Heart right ventricle (tissue), 16 donors: ENCODE measurements at regions of chr20 and their contacts with region 1.

Region 1: DNA sequence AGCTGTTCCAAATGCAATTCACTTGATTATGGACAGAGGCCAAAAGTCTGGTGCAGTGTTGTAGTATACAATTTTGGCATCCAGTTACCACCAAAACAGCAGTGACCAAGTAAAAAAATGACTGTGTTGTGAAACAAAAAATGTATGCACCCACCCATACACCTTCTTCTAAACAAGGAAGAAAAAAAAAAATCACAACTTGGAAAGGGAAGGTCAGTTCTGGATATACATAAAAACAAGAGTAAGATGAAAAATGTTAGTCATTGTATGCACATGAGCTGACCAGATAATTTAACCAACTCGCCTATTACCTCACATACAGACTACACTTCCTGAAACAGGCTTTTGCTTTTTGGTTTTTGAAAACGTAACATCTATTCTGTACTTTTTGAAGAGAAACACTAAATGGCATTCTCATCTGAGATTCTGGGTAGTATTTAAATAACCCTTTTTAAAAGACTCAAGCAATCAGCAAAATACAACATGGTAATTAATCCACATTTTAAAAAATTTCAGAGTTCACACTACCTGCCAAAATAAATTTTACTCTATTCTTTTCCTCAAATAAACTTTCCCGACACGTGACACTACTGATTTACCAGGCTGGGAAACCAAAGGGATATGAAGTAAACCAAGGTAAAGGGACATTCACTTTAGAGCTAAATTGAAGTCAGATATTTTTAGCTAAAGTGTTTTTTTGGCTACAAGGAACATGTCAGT is 141.6 kb upstream of the SHLD1 start:
- DNase-seq: no peak
- ATAC-seq: no peak
- H3K4me3 ChIP-seq: peak overlapping the region in 9 of 10 donors; percentile 61 to 84 (median 80)
- H3K27ac ChIP-seq: peak overlapping the region in 7 of 10 donors; percentile 85 to 99 (median 92)
- H3K4me1 ChIP-seq: peaks cover 0 to 71% (median 36%) of the 10 kb centered on the region in 9 donors
- H3K27me3 ChIP-seq: no peaks in the 10 kb centered on the region
- CTCF ChIP-seq: no peak

Region 2: DNA sequence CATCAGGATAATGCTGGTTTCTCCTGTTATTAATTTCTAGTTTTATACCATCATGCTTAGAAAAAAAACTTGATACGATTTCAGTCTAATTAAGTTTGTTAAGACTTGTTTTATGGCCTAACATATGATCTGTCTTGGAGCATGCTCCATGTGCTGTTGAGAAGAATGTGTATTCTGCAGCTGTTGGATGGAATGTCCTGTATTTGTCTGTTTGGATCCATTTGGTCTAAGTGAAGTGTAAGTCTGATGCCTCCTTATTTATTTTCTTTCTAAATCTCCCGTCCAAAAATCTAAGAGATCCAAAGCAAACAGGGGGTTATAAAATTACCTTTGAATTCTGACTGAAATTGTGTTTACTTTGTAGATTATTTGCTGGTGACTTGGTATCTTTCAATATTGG is 916.8 kb before region 1 on chr20:
- intact Hi-C with region 1: loop called in 1 of 10 experiments (anchors 5 kb)
- DNase-seq: no peak
- ATAC-seq: no peak
- H3K4me3 ChIP-seq: no peak overlapping the region
- H3K27ac ChIP-seq: no peak overlapping the region
- H3K4me1 ChIP-seq: peaks cover 3 to 50% (median 41%) of the 10 kb centered on the region in 9 donors
- H3K27me3 ChIP-seq: no peaks in the 10 kb centered on the region
- CTCF ChIP-seq: no peak

Region 3: GRCh38 chr20:5535125-5535771 is 73.4 kb before region 1 on chr20:
- intact Hi-C with region 1: no loop called
- DNase-seq: no peak
- ATAC-seq: peak in 4 of 8 donors; percentile 18 to 67 (median 31)
- H3K4me3 ChIP-seq: no peak overlapping the region
- H3K27ac ChIP-seq: peak overlapping the region in 1 of 10 donors; percentile 33
- H3K4me1 ChIP-seq: peaks cover 0 to 50% (median 0%) of the 10 kb centered on the region in 9 donors
- H3K27me3 ChIP-seq: no peaks in the 10 kb centered on the region
- CTCF ChIP-seq: no peak

Region 4: GRCh38 chr20:5569021-5569420 is 39.6 kb before region 1 on chr20:
- intact Hi-C with region 1: loop called in 1 of 10 experiments (anchors 5 kb)
- DNase-seq: peak in 1 of 2 donors; percentile 44
- ATAC-seq: peak in 4 of 8 donors; percentile 58 to 67 (median 64)
- H3K4me3 ChIP-seq: no peak overlapping the region
- H3K27ac ChIP-seq: peak overlapping the region in 1 of 10 donors; percentile 72
- H3K4me1 ChIP-seq: peaks cover 0 to 40% (median 0%) of the 10 kb centered on the region in 9 donors
- H3K27me3 ChIP-seq: no peaks in the 10 kb centered on the region
- CTCF ChIP-seq: peak; percentile 17 to 67 (median 51)

Region 5: GRCh38 chr20:5749952-5750779 is 141.6 kb after region 1 on chr20 and contains the start of gene SHLD1:
- intact Hi-C with region 1: loop called in 2 of 10 experiments (anchors 5 to 10 kb)
- DNase-seq: peak; percentile 80 to 91
- ATAC-seq: peak; percentile 96 to 99 (median 98)
- H3K4me3 ChIP-seq: peak within 1 kb of the TSS; percentile 45 to 76 (median 66)
- H3K27ac ChIP-seq: peak within 1 kb of the TSS; percentile 80 to 93 (median 84)
- H3K4me1 ChIP-seq: peaks cover 0 to 13% (median 7%) of the 10 kb centered on the region in 9 donors
- H3K27me3 ChIP-seq: no peaks in the 10 kb centered on the region
- CTCF ChIP-seq: no peak
- total RNA-seq, gene SHLD1: 3.2 to 8.5 (median 4.8) TPM

Region 6: DNA sequence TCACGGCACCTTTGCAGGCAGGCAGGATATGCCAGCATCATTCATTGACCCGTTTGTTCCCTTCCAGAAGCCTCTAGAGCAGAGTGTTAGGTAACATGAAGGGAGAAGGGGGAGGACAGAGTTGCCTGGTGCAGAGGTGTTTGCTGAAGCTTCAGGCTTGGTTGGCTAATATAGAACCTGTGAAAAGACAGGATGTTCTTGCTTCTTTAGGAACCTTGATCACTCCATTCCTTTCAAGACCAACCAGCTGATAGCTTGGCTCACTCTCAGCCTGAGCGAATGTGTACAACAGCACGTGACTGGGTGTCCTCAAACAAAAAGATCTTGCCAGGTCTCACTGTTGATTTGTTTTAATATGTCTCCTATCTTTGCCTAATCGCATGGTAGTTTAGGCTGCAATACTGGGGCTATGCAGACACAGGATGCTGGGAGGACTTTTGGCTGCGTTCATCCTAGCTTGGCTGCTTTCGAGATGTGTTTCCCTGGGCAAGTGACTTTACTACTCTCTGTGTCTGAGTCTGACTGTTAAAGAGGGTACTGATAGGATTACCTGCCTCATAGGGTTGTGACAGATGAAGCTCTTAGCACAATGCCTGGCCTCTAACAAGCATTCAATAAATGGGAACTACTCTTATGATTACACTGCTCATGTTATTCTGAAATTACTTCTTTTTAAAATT is 157.6 kb after region 1 on chr20:
- intact Hi-C with region 1: loop called in 1 of 10 experiments (anchors 5 kb)
- DNase-seq: no peak
- ATAC-seq: peak; percentile 38 to 95 (median 65)
- H3K4me3 ChIP-seq: no peak overlapping the region
- H3K27ac ChIP-seq: peak overlapping the region in 2 of 10 donors; percentile 12 to 56
- H3K4me1 ChIP-seq: peaks cover 0 to 28% (median 4%) of the 10 kb centered on the region in 9 donors
- H3K27me3 ChIP-seq: no peaks in the 10 kb centered on the region
- CTCF ChIP-seq: no peak

Region 7: DNA sequence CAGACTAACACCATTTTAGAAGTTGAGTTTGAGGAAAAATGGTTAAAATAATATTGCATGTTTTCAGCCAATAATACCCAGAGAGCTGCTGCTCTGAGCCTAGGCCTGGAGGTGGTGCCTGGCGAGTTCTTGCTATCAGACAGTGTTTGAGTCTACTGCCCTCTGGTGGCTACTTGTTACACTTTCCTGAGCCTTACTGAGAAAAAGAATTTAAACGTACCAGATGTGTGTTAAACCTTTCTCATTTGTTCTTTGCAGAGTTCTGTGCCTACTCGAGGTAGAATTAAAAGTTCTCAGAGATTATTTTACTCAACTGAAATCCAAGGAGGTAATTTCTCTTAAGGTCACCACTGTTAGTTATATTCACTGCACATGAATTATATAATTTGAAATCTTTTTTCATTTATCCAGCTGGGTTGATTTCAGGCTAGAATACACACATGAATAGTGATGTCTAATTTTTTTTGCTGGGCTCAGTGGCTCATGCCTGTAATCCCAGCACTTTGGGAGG is 179.8 kb after region 1 on chr20:
- intact Hi-C with region 1: loop called in 1 of 10 experiments (anchors 5 kb)
- DNase-seq: peak; percentile 35 to 86
- ATAC-seq: peak; percentile 86 to 98 (median 92)
- H3K4me3 ChIP-seq: no peak overlapping the region
- H3K27ac ChIP-seq: no peak overlapping the region
- H3K4me1 ChIP-seq: peaks cover 0 to 26% (median 14%) of the 10 kb centered on the region in 9 donors
- H3K27me3 ChIP-seq: no peaks in the 10 kb centered on the region
- CTCF ChIP-seq: peak; percentile 84 to 95 (median 92)

Region 8: GRCh38 chr20:5950271-5951031 is 341.8 kb after region 1 on chr20 and contains the starts of genes MCM8 and TRMT6:
- intact Hi-C with region 1: loop called in 1 of 10 experiments (anchors 5 kb)
- DNase-seq: peak; percentile 95
- ATAC-seq: peak; percentile 100
- H3K4me3 ChIP-seq: peak within 1 kb of the TSS; percentile 69 to 98 (median 84)
- H3K27ac ChIP-seq: peak within 1 kb of the TSS in 9 of 10 donors; percentile 59 to 87 (median 77)
- H3K4me1 ChIP-seq: peaks cover 0 to 37% (median 19%) of the 10 kb centered on the region in 9 donors
- H3K27me3 ChIP-seq: no peaks in the 10 kb centered on the region
- CTCF ChIP-seq: peak in 1 of 9 donors; percentile 8
- total RNA-seq, gene MCM8: 6.1 to 8.9 (median 6.4) TPM
- total RNA-seq, gene TRMT6: 7.6 to 12.8 (median 9.2) TPM